AG04450 (cell line): ENCODE measurements at regions of chr1 and their contacts with region 1.

Region 1: GRCh38 chr1:232653789-232654188 is 23.9 kb upstream of the SIPA1L2 start:
- DNase-seq: no peak
- H3K4me3 ChIP-seq: no peak overlapping the region
- H3K27ac ChIP-seq: no peak overlapping the region
- H3K27me3 ChIP-seq: no peaks in the 10 kb centered on the region
- CTCF ChIP-seq: no peak

Region 2: DNA sequence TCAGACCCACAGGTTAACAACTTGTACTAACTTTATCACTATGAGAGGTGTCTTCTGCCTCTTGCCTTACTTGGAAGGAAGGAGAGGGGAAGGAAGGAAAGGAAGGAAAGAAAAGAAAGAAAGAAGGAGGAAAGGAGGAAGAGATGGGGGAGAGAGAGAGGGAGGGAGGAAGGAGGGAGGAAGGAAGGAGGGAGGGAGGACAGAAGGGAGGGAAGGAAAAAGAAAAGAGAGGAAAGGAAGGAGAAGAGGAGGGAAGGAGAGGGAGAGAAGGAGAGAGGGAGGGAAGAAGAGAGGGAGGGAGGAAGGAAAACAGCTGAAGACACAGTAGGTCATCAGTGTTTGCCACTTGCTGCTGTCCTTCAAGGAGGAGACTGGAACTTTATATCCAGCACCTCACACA is 18.5 kb before region 1 on chr1:
- CTCF ChIA-PET with region 1: interaction called, 13 read pairs
- POLR2A ChIA-PET with region 1: no interaction called
- DNase-seq: no peak
- H3K4me3 ChIP-seq: no peak overlapping the region
- H3K27ac ChIP-seq: no peak overlapping the region
- H3K27me3 ChIP-seq: no peaks in the 10 kb centered on the region
- CTCF ChIP-seq: no peak